ENCODE measurements at regions of chr3 and their contacts with region 1.

Region 1: DNA sequence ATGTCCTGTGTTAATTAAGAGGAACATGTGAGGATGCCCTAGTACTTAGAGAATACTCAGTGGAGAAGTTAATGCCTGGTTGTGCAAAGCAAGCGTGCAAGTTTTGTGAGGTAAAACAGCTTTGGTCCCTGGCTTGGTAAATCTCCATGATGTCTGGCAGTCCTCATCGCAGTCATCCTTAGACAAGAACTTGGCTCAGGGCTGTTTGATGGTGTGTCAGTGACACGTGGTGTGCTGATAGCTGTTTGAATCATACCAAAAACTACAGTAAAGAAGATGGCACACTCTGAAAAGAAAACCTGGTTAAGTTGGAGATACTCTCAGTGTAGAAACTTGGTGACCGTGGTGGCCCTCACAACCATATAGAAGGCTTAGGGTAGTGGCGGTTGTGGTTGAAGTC is 361.7 kb downstream of the FEZF2 start:
- DNase-seq: no peak

Region 2: DNA sequence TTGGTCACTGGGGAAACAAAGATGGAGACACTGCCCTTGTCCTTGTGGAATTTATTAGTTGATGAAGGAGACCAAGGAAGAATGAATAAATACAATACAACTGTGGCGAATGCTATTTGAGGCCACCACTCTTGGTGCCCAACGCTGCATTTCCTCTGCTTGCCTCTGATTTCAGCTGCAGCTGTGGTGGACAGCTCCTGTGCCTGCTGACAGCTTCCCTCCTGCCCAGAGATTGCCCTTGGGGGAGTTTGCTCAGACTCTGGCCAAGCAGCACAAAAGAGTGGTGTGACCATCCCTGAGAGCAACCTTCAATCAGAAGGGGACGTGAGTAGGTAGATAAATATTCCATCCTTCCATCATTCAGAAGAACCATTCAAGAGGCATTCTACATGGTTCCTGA is 695.8 kb before region 1 on chr3:
- intact Hi-C with region 1: loop called in 1 of 2 experiments (anchors 5 kb)
- DNase-seq: no peak

Region 3: DNA sequence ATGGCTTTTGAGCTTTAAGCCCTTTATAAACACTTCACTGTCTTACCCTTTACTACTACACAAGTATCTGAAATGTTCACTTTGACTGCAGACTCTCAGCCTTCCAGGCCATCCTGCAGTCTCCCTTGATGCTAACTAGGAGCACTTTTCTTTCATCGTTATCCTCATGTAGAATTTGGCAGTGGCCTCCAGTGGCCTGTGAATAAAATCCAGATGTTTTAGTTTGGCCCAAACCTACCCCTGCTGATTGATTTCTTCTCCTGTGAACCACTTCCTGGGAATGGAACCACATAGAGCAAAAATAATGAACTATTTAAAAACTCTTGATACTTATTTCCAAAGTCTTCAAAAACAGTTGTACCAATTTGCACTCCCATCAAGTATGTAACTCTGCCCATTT is 89.8 kb after region 1 on chr3:
- intact Hi-C with region 1: no loop called
- DNase-seq: no peak

Measured in posterior vena cava (tissue), 2 donors.